GM12878 (cell line): ENCODE measurements at regions of chr12 and their contacts with region 1.

Region 1: DNA sequence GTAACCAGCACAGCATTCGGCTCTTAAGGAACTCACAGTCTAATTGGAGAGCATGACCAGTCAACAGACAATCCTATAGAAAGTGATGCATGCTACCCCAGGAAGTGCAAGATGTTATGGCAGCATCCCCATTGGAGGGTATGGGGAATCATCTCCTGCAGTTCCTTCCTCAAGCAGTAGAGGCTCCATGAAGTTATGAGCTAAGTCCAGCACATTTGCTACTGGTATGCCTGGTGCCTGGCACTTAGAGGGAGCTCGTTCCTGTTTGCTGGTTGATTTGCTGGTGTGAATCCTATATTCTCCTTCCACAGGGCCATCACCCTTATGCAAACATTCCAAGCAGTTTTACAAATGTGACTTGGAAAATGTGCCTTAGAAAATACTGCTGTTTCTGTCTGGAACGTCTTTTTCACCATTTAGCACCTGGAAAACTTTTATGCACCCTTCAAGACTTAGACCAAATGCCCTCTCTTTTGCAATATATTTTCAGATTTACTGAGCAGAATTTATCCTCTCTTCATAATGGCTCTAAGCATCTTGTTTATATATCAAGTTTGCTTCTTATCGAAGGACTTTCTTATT is 136.1 kb upstream of the WSCD2 start:
- DNase-seq: peak; percentile 2
- ATAC-seq: peak; percentile 98
- H3K4me3 ChIP-seq: no peak overlapping the region
- H3K27ac ChIP-seq: no peak overlapping the region
- H3K4me1 ChIP-seq: no peaks in the 10 kb centered on the region
- H3K27me3 ChIP-seq: no peaks in the 10 kb centered on the region
- CTCF ChIP-seq: peak; percentile 52 to 65 (median 63)
- EP300 ChIP-seq: no peak
- POLR2A ChIP-seq: no peak
- RAD21 ChIP-seq: 0 out of 2 replicates have a peak, but pooled peaks have one; percentile 28

Region 2: DNA sequence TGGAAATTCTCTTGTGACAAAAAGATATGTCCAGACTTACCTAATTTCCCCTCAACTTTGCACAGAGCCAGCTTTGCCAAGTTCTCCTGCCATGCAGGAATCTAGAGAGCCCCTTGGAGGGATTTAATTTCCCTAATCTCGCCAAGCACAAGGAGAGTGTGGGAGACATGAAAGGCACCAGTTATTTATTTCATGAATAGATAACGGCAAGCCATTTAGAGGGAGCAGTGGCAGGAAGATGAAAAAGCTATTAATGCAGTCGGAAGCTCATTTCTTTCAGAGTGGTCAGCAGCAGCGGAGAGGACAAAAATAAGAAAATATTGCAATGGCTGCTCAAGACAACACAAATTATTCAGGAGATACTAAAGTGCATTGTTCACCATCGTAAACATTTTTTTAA is 14.8 kb before region 1 on chr12:
- CTCF ChIA-PET with region 1: interaction called, 14 read pairs
- POLR2A ChIA-PET with region 1: no interaction called
- RAD21 ChIA-PET with region 1: interaction called, 3 read pairs
- SMC1A ChIA-PET with region 1: interaction called, 6 read pairs
- in situ Hi-C with region 1: no loop called
- intact Hi-C with region 1: no loop called
- DNase-seq: no peak
- ATAC-seq: no peak
- H3K4me3 ChIP-seq: no peak overlapping the region
- H3K27ac ChIP-seq: no peak overlapping the region
- H3K4me1 ChIP-seq: no peaks in the 10 kb centered on the region
- H3K27me3 ChIP-seq: no peaks in the 10 kb centered on the region
- CTCF ChIP-seq: no peak
- EP300 ChIP-seq: no peak
- POLR2A ChIP-seq: no peak
- RAD21 ChIP-seq: no peak

Region 3: DNA sequence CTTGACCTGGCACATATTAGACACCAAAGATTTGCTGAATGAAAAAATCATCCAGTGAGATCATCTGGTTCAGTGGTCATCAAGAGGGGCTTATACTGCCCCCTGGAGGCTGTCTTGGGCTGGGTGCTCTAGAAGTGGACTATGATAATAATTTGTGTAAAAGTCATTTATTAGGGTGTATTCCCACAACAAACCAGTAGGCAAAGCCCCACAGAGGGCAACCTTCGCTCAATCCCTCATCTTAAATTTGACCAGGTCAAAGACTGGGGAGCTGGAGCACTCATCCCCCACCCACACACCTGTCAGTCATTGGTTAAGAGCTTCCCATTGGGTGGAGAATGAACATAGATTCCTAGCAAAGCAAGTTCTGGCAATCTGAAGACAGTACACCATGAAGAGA is 502.1 kb after region 1 on chr12:
- CTCF ChIA-PET with region 1: interaction called, 5 read pairs
- POLR2A ChIA-PET with region 1: no interaction called
- RAD21 ChIA-PET with region 1: interaction called, 3 read pairs
- SMC1A ChIA-PET with region 1: interaction called, 3 read pairs
- in situ Hi-C with region 1: no loop called
- intact Hi-C with region 1: loop called (anchors 5 kb)
- DNase-seq: no peak
- ATAC-seq: peak; percentile 88
- H3K4me3 ChIP-seq: no peak overlapping the region
- H3K27ac ChIP-seq: no peak overlapping the region
- H3K4me1 ChIP-seq: no peaks in the 10 kb centered on the region; the same call in 1 of the 2 replicates
- H3K27me3 ChIP-seq: no peaks in the 10 kb centered on the region
- CTCF ChIP-seq: peak; percentile 42 to 67 (median 57)
- EP300 ChIP-seq: no peak
- POLR2A ChIP-seq: no peak
- RAD21 ChIP-seq: peak; percentile 68